ENCODE measurements at regions of chr2 and their contacts with region 1.

Region 1: GRCh38 chr2:12014088-12014960 is 267.9 kb downstream of the LPIN1 start:
- DNase-seq: peak; percentile 10
- H3K4me3 ChIP-seq: no peak overlapping the region
- H3K27ac ChIP-seq: no peak overlapping the region
- H3K4me1 ChIP-seq: peaks cover 37% of the 10 kb centered on the region
- CTCF ChIP-seq: no peak

Region 2: GRCh38 chr2:11967946-11968465 is 46.3 kb before region 1 on chr2:
- CTCF ChIA-PET with region 1: no interaction called
- POLR2A ChIA-PET with region 1: no interaction called
- intact Hi-C with region 1: loop called (anchors 1 kb)
- DNase-seq: no peak
- H3K4me3 ChIP-seq: no peak overlapping the region
- H3K27ac ChIP-seq: no peak overlapping the region
- H3K4me1 ChIP-seq: peaks cover 7% of the 10 kb centered on the region
- CTCF ChIP-seq: no peak

Measured in OCI-LY7 (cell line).